ENCODE measurements at regions of chr4 and their contacts with region 1.

Region 1: GRCh38 chr4:15479089-15479912 is 9.6 kb downstream of the CC2D2A start:
- DNase-seq: peak; percentile 92
- H3K4me3 ChIP-seq: peak overlapping the region; percentile 59
- H3K27ac ChIP-seq: peak overlapping the region; percentile 69
- H3K4me1 ChIP-seq: peaks cover 9% of the 10 kb centered on the region
- H3K27me3 ChIP-seq: no peaks in the 10 kb centered on the region
- CTCF ChIP-seq: peak; percentile 82

Region 2: GRCh38 chr4:15291122-15291521 is 188.2 kb before region 1 on chr4:
- CTCF ChIA-PET with region 1: no interaction called
- POLR2A ChIA-PET with region 1: no interaction called
- intact Hi-C with region 1: no loop called
- DNase-seq: peak; percentile 70
- H3K4me3 ChIP-seq: no peak overlapping the region
- H3K27ac ChIP-seq: no peak overlapping the region
- H3K4me1 ChIP-seq: peaks cover 50% of the 10 kb centered on the region
- H3K27me3 ChIP-seq: no peaks in the 10 kb centered on the region
- CTCF ChIP-seq: no peak

Region 3: DNA sequence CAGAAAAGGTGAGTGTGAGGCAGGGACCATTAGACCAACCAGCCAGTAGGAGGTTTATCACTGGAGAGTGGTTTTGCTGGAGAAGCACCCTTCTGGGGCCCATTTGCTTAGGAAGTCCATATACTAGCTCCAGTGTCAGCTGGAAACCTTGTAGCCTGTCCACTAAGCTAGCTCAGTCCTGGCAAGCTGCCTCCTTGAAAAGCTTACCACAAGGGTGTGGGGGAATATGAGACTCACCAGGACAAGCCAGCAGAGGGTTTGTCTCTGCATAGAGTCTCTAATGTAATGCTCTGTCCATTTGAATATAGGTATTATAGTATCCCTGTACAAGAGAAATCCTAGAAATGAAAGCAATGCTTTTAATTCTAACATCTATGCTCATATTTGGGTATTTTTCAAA is 89.5 kb after region 1 on chr4:
- CTCF ChIA-PET with region 1: no interaction called
- POLR2A ChIA-PET with region 1: no interaction called
- intact Hi-C with region 1: no loop called
- DNase-seq: no peak
- H3K4me3 ChIP-seq: no peak overlapping the region
- H3K27ac ChIP-seq: no peak overlapping the region
- H3K4me1 ChIP-seq: no peaks in the 10 kb centered on the region
- H3K27me3 ChIP-seq: no peaks in the 10 kb centered on the region
- CTCF ChIP-seq: no peak

Region 4: GRCh38 chr4:15649914-15650545 is 170.7 kb after region 1 on chr4:
- CTCF ChIA-PET with region 1: interaction called, 5 read pairs
- POLR2A ChIA-PET with region 1: no interaction called
- intact Hi-C with region 1: loop called (anchors 1 kb)
- DNase-seq: peak; percentile 87
- H3K4me3 ChIP-seq: no peak overlapping the region
- H3K27ac ChIP-seq: peak overlapping the region; percentile 41
- H3K4me1 ChIP-seq: peaks cover 36% of the 10 kb centered on the region
- H3K27me3 ChIP-seq: no peaks in the 10 kb centered on the region
- CTCF ChIP-seq: peak; percentile 82

Region 5: GRCh38 chr4:15882675-15883086 is 403.4 kb after region 1 on chr4:
- CTCF ChIA-PET with region 1: no interaction called
- POLR2A ChIA-PET with region 1: no interaction called
- intact Hi-C with region 1: loop called (anchors 5 kb)
- DNase-seq: peak; percentile 81
- H3K4me3 ChIP-seq: no peak overlapping the region
- H3K27ac ChIP-seq: no peak overlapping the region
- H3K4me1 ChIP-seq: peaks cover 20% of the 10 kb centered on the region
- H3K27me3 ChIP-seq: no peaks in the 10 kb centered on the region
- CTCF ChIP-seq: peak; percentile 93

Region 6: DNA sequence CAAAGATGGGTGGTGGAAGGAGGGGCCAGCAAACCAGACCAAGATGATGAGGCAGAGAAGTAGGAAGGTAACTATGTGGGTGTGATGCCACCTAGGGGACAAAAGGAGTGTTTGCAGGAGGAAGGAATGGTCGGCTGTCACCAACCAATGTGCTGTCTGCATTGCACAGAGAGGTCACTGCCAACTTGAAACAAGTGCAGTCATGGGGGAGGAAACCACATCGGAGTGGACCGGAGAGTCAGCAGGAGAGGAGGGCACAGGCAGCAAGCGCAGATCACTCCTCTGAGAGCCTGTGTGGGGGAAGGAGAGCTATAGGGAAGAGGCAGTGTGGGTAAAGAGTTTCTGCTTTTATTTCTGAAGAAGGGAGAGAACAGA is 522.2 kb after region 1 on chr4:
- CTCF ChIA-PET with region 1: no interaction called
- POLR2A ChIA-PET with region 1: no interaction called
- intact Hi-C with region 1: loop called (anchors 5 kb)
- DNase-seq: peak; percentile 82
- H3K4me3 ChIP-seq: no peak overlapping the region
- H3K27ac ChIP-seq: no peak overlapping the region
- H3K4me1 ChIP-seq: no peaks in the 10 kb centered on the region
- H3K27me3 ChIP-seq: no peaks in the 10 kb centered on the region
- CTCF ChIP-seq: peak; percentile 90

Region 7: DNA sequence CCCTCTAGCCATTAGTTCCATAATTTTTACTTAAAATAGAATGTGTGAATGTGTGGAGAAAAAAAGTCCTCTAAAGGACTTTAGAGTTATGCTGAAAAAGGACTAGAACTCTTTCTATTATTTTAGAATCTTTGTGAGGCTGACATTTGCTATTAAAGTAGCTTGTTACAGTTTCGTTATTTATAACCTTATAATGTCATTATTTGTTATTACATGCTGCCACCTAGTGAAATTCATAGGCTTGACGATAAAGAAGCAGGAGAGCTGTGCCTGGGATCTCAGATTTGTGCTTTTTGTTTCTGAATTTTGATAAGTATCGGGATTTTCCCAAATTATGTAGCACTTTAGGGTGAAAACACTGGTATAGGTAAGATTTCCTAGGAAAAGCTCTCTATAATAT is 785.5 kb after region 1 on chr4:
- CTCF ChIA-PET with region 1: no interaction called
- POLR2A ChIA-PET with region 1: no interaction called
- intact Hi-C with region 1: loop called (anchors 10 kb)
- DNase-seq: peak; percentile 67
- H3K4me3 ChIP-seq: no peak overlapping the region
- H3K27ac ChIP-seq: no peak overlapping the region
- H3K4me1 ChIP-seq: peaks cover 5% of the 10 kb centered on the region
- H3K27me3 ChIP-seq: no peaks in the 10 kb centered on the region
- CTCF ChIP-seq: peak; percentile 65

Measured in A673 (cell line).